IMR-90 (cell line): ENCODE measurements at regions of chr18 and their contacts with region 1.

Region 1: DNA sequence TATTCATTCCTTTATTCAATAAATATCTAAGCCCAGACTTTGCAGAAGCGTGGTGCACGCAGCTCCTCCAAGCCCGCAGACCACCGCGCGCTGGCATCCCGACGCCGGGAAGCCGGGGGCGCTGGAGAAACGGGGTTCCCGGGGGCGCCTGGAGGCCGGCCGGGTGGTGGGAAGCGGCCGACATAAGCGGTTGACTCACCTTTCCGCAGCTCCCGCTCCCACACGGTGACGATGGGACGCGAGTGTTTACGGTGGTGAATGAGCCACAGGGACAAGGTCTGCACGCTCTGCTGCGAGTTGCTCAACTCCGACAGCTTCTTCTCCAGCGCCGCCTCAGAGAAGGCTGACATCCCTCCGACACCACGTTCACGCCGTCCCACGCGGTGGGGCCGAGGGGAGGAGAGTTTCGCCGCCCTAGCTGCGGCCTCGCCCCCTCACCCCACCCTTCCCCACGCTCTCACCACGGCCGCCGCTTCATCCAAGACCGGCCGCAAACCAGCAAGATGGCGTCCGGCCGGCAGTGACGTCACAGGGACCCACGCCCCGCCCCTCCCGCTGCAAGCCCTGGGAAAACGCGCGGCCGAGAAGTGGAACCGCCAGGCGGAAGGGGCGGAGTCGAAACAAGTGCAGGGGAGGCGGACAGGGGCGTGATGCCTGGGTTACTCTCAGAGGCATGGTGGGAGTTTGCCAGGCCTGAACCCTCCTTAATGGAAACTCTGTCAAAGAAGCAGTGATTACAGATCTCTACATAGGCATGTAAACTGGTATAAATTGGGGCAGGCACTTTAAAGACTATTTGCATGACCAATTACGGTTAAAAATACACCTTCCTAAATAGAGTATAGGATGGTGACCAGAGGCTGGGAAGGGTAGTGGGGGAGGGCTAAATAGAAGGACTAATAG is at the start of gene RPRD1A:
- DNase-seq: peak; percentile 95
- ATAC-seq: peak; percentile 98
- H3K4me3 ChIP-seq: peak within 1 kb of the TSS; percentile 63
- H3K27ac ChIP-seq: peak within 1 kb of the TSS; percentile 80
- H3K4me1 ChIP-seq: peaks cover 1% of the 10 kb centered on the region; the same call in 1 of the 2 replicates
- H3K27me3 ChIP-seq: no peaks in the 10 kb centered on the region
- CTCF ChIP-seq: 0 out of 2 replicates have a peak, but pooled peaks have one; percentile 11
- POLR2A ChIP-seq: peak; percentile 89
- RAD21 ChIP-seq: no peak; the same call in 1 of the 2 replicates
- total RNA-seq, gene RPRD1A: 27.2 and 49.7 TPM in 2 replicates

Region 2: GRCh38 chr18:36031407-36031806 is 35.9 kb before region 1 on chr18:
- CTCF ChIA-PET with region 1: no interaction called
- POLR2A ChIA-PET with region 1: no interaction called
- dilution Hi-C with region 1: no loop called
- in situ Hi-C with region 1: no loop called
- intact Hi-C with region 1: loop called (anchors 5 kb)
- DNase-seq: no peak
- ATAC-seq: no peak
- H3K4me3 ChIP-seq: no peak overlapping the region
- H3K27ac ChIP-seq: no peak overlapping the region
- H3K4me1 ChIP-seq: peaks cover 1% of the 10 kb centered on the region; the same call in 1 of the 2 replicates
- H3K27me3 ChIP-seq: no peaks in the 10 kb centered on the region
- CTCF ChIP-seq: no peak
- POLR2A ChIP-seq: no peak
- RAD21 ChIP-seq: no peak